ENCODE measurements at regions of chr10 and their contacts with region 1.

Region 1: GRCh38 chr10:4639960-4640359 is 186.0 kb upstream of the AKR1E2 start:
- DNase-seq: peak; percentile 28 to 46
- ATAC-seq: peak; percentile 90 to 95
- H3K4me3 ChIP-seq: no peak overlapping the region
- H3K27ac ChIP-seq: peak overlapping the region; percentile 63 to 67 (median 63)
- H3K4me1 ChIP-seq: peaks cover 23 to 28% of the 10 kb centered on the region in 2 donors
- H3K27me3 ChIP-seq: no peaks in the 10 kb centered on the region
- CTCF ChIP-seq: no peak
- POLR2A ChIP-seq: no peak

Region 2: DNA sequence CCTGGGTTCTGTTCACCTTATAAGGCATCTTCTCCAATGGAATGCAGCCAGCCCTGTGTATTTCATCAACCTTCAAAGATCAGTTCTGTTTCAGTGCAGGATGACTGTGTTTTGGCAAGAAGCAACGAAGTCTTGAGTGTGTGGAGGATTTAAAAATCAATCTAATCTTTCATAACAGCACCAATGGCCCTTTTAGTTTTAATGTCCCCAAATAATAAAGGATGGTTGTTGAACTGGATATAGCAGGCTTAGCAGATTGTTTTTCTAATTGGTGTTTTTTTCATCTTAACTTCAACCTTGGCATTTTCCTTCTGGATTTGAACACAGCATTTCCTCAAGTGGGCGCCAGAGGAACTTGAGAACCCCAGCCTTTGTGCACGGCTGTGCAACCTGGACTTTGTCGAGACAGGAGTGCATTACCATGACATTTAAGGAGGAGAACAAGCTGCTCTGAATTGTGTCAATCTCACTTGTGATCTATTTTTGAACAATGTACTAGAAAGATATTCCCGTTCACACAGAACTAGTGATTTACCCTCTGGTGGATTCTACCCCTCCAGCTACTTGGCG is 127.2 kb before region 1 on chr10:
- in situ Hi-C with region 1: loop called in 1 of 4 experiments (anchors 10 kb)
- intact Hi-C with region 1: loop called (anchors 5 kb)
- DNase-seq: peak in 1 of 2 donors; percentile 22
- ATAC-seq: peak in 1 of 2 donors; percentile 40
- H3K4me3 ChIP-seq: no peak overlapping the region
- H3K27ac ChIP-seq: no peak overlapping the region
- H3K4me1 ChIP-seq: peaks cover 0 to 19% of the 10 kb centered on the region in 2 donors
- H3K27me3 ChIP-seq: no peaks in the 10 kb centered on the region
- CTCF ChIP-seq: peak in 4 of 5 experiments; percentile 20 to 38 (median 24)
- POLR2A ChIP-seq: no peak